Activated CD4-positive, alpha-beta T cell treated with anti-CD3 and anti-CD28 coated beads for 36 hours (primary cell): ENCODE measurements at regions of chr6 and their contacts with region 1.

Region 1: DNA sequence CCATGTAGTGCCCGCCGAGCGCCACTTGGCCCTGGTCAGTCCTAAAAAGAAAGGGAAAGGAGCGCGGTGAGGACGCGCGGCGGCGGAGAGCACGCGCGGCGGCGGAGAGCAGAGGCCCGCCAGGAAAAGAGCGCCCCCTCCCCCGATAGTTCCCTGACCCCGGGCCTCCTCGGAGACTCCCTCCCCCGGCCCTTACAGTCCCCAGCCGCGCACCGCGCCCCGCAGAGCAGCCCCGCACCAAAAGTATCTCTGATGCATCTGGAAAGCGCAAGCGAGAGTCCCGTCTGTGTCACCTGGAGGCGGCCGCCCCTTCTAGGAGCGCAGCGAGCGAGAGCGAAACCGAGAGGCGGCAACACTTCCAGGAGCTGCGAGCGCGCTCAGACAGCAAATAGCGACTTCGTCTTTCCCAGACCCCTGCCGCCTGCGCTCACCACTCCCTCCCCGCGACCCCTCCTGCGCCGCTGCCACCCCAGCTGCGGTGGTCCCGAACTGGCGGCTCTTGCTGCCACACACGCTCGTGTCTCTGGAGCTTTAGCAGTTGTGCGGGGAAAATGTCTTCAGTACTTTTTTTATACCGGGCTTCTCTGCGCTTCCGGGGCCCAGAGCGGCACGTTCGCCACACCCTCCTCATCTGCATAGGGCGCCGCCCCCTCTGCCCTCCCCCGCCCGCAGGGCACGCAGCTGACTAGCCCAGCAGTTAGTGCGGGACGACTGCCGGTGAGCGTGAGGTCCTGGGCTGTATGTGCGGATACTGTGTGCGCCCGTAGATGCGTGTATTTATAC is at the start of gene TENT5A:
- DNase-seq: peak; percentile 90
- ATAC-seq: peak; percentile 81
- H3K4me3 Mint-ChIP-seq: peak within 1 kb of the TSS; percentile 77
- H3K27ac Mint-ChIP-seq: peak within 1 kb of the TSS; percentile 71
- H3K4me1 Mint-ChIP-seq: peaks cover 21% of the 10 kb centered on the region
- H3K27me3 Mint-ChIP-seq: peaks cover 14% of the 10 kb centered on the region
- total RNA-seq, gene TENT5A: 0.43 to 0.51 TPM

Region 2: DNA sequence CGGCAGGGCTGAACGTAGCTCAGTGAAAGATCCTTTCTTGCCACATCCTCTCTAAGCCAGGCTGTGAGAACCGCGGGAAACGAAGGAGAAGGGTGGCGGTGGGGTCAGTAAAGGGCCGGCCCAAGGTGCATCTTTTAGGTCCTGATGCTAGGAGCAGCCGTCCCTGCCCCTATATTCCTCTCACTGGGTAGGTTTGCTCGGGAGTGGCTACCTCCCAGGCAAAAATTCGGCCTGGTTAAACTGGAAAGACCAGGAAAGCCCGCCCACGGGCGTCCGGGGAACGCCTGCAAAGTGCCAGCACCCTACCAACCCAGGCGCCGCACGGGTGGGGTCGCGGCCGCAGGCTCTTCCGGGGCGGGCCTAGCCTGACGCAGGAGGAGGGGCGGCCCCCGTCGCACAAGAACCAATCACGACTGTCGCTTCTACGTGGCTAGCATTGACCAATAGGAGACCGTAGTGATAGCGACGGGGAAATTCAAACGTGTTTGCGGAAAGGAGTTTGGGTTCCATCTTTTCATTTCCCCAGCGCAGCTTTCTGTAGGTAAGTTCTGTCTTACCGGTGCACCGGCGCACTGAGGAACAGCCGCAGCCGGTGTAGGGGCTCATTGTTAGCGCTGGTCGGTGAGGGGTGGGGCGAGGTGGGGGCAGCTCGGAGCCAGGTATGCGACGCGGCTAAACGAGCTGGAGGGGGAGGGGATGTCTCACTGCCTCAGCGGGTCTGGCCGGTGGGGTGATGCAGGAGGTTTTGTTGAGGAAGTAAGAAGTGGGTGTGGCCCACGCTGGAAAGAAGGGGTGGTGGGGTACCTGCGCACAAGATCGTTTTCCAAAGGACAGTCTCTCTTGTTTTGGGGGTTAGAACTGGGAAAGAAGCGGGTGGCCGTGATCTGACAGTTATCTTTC is 1747.9 kb before region 1 on chr6 and contains the start of gene TTK:
- CTCF ChIA-PET with region 1: interaction called, 3 read pairs
- POLR2A ChIA-PET with region 1: interaction called, 3 read pairs
- intact Hi-C with region 1: loop called in 1 of 2 experiments (anchors 1 kb)
- DNase-seq: peak; percentile 94
- ATAC-seq: peak; percentile 99
- H3K4me3 Mint-ChIP-seq: peak within 1 kb of the TSS; percentile 87
- H3K27ac Mint-ChIP-seq: peak within 1 kb of the TSS; percentile 95
- H3K4me1 Mint-ChIP-seq: peaks cover 13% of the 10 kb centered on the region
- H3K27me3 Mint-ChIP-seq: no peaks in the 10 kb centered on the region
- total RNA-seq, gene TTK: 39.1 to 47.2 TPM

Region 3: DNA sequence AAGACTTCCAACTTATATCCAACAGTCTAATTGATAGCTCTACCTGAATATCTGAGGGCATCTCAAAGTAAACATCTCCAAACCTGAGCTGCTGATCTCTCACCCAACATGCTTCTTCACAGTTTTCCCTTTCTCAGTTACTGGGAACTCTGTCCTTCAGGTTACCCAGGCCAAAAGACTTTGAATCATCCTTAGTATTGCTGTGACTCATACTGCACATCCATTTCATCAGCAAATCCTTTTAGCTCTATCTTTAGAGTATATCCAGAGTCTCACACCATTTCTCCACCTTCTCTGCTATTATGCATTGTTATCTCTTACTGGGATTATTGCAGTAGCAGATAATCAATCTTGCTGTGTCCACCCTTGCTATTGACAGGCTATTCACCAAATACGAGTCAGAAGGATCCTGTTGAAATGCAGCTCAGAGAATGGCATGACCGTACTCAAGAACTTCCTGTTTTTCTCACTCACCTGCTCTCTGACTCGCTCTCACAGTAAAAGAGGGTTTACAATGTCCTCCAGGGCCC is 1588.6 kb before region 1 on chr6:
- CTCF ChIA-PET with region 1: interaction called, 3 read pairs
- POLR2A ChIA-PET with region 1: no interaction called
- intact Hi-C with region 1: loop called in 1 of 2 experiments (anchors 2 kb)
- DNase-seq: peak; percentile 13
- ATAC-seq: peak; percentile 80
- H3K4me3 Mint-ChIP-seq: no peak overlapping the region
- H3K27ac Mint-ChIP-seq: no peak overlapping the region
- H3K4me1 Mint-ChIP-seq: peaks cover 2% of the 10 kb centered on the region
- H3K27me3 Mint-ChIP-seq: no peaks in the 10 kb centered on the region

Region 4: GRCh38 chr6:80605165-80605989 is 1147.0 kb before region 1 on chr6:
- CTCF ChIA-PET with region 1: interaction called, 3 read pairs
- POLR2A ChIA-PET with region 1: no interaction called
- intact Hi-C with region 1: loop called (anchors 1 to 2 kb)
- DNase-seq: no peak
- ATAC-seq: no peak
- H3K4me3 Mint-ChIP-seq: no peak overlapping the region
- H3K27ac Mint-ChIP-seq: no peak overlapping the region
- H3K4me1 Mint-ChIP-seq: no peaks in the 10 kb centered on the region
- H3K27me3 Mint-ChIP-seq: peaks cover 9% of the 10 kb centered on the region

Region 5: GRCh38 chr6:81589461-81590323 is 162.6 kb before region 1 on chr6:
- CTCF ChIA-PET with region 1: no interaction called
- POLR2A ChIA-PET with region 1: no interaction called
- intact Hi-C with region 1: no loop called
- DNase-seq: no peak
- ATAC-seq: no peak
- H3K4me3 Mint-ChIP-seq: no peak overlapping the region
- H3K27ac Mint-ChIP-seq: no peak overlapping the region
- H3K4me1 Mint-ChIP-seq: no peaks in the 10 kb centered on the region
- H3K27me3 Mint-ChIP-seq: no peaks in the 10 kb centered on the region

Region 6: DNA sequence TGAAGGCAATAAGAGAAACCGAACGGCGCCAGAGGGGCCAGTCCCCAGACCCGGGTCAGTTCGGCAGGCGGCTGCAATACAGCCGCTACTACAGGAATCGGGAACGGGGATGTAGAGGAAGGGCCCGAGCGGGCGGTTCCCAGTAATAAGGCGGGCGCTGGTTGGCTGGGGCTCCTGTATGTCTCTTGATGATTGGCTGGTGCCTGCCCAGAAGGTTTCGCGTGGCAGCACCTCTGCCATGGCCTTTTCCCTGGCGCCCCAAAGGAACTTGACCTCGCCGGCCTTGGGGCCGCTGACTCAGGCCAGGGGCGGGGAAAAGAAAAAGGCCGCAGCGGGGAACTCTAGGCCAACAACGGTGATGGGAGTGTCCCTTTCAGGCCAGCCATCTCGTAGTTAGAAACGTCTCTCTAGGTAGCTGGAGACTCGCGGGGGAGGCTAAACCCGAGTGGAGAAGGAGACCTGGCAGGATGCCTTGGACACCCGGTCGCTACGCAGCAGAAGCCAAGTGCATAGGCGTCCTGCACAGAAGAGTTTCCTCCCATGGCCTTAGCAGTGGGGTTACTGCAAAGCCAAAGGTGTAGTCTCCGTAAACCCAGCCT is 495.4 kb after region 1 on chr6 and contains the start of gene IBTK:
- CTCF ChIA-PET with region 1: no interaction called
- POLR2A ChIA-PET with region 1: no interaction called
- intact Hi-C with region 1: loop called in 1 of 2 experiments (anchors 2 kb)
- DNase-seq: peak; percentile 92
- ATAC-seq: peak; percentile 87
- H3K4me3 Mint-ChIP-seq: peak within 1 kb of the TSS; percentile 97
- H3K27ac Mint-ChIP-seq: peak within 1 kb of the TSS; percentile 93
- H3K4me1 Mint-ChIP-seq: peaks cover 34% of the 10 kb centered on the region
- H3K27me3 Mint-ChIP-seq: no peaks in the 10 kb centered on the region
- total RNA-seq, gene IBTK: 28.6 to 29.5 TPM